ENCODE measurements at regions of chr7 and their contacts with region 1.

Region 1: GRCh38 chr7:55469271-55469681 is 103.0 kb downstream of the VOPP1 start:
- DNase-seq: peak; percentile 42
- H3K4me3 Mint-ChIP-seq: peak overlapping the region; percentile 5
- H3K27ac Mint-ChIP-seq: peak overlapping the region; percentile 85
- H3K4me1 Mint-ChIP-seq: peaks cover 75% of the 10 kb centered on the region
- H3K27me3 Mint-ChIP-seq: no peaks in the 10 kb centered on the region

Region 2: GRCh38 chr7:55365675-55366460 is 103.4 kb before region 1 on chr7:
- CTCF ChIA-PET with region 1: no interaction called
- POLR2A ChIA-PET with region 1: no interaction called
- intact Hi-C with region 1: no loop called
- DNase-seq: peak; percentile 95
- H3K4me3 Mint-ChIP-seq: peak overlapping the region; percentile 80
- H3K27ac Mint-ChIP-seq: peak overlapping the region; percentile 98
- H3K4me1 Mint-ChIP-seq: peaks cover 26% of the 10 kb centered on the region
- H3K27me3 Mint-ChIP-seq: no peaks in the 10 kb centered on the region

Region 3: GRCh38 chr7:55400191-55400590 is 69.1 kb before region 1 on chr7:
- CTCF ChIA-PET with region 1: no interaction called
- POLR2A ChIA-PET with region 1: no interaction called
- intact Hi-C with region 1: no loop called
- DNase-seq: no peak
- H3K4me3 Mint-ChIP-seq: no peak overlapping the region
- H3K27ac Mint-ChIP-seq: no peak overlapping the region
- H3K4me1 Mint-ChIP-seq: no peaks in the 10 kb centered on the region
- H3K27me3 Mint-ChIP-seq: no peaks in the 10 kb centered on the region

Region 4: GRCh38 chr7:55483046-55483445 is 13.8 kb after region 1 on chr7:
- CTCF ChIA-PET with region 1: no interaction called
- POLR2A ChIA-PET with region 1: no interaction called
- intact Hi-C with region 1: loop called (anchors 2 kb)
- DNase-seq: peak; percentile 9
- H3K4me3 Mint-ChIP-seq: no peak overlapping the region
- H3K27ac Mint-ChIP-seq: peak overlapping the region; percentile 52
- H3K4me1 Mint-ChIP-seq: peaks cover 82% of the 10 kb centered on the region
- H3K27me3 Mint-ChIP-seq: no peaks in the 10 kb centered on the region

Region 5: GRCh38 chr7:55546829-55547228 is 77.6 kb after region 1 on chr7:
- CTCF ChIA-PET with region 1: no interaction called
- POLR2A ChIA-PET with region 1: no interaction called
- intact Hi-C with region 1: no loop called
- DNase-seq: peak; percentile 76
- H3K4me3 Mint-ChIP-seq: no peak overlapping the region
- H3K27ac Mint-ChIP-seq: peak overlapping the region; percentile 42
- H3K4me1 Mint-ChIP-seq: peaks cover 75% of the 10 kb centered on the region
- H3K27me3 Mint-ChIP-seq: no peaks in the 10 kb centered on the region

Region 6: DNA sequence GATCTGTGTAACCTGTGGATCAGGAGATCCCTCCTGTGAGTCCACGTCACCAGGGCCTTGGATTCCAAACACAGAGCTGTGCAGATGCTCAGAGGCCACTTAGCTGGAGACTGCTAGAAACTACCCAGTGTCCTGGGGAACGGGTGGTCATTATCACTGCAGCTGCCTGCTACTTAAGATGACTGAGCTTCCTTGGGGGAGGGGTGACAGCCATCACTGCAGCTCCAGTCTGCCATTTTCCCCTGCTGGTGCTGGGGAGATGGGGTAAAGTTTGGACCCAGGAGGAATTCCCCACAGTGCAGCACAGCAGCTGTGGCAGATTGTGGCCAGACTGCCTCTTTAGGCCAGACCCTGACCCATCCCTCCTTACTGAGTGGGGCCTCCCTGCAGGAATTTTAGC is 181.8 kb after region 1 on chr7:
- CTCF ChIA-PET with region 1: no interaction called
- POLR2A ChIA-PET with region 1: no interaction called
- intact Hi-C with region 1: no loop called
- DNase-seq: no peak
- H3K4me3 Mint-ChIP-seq: no peak overlapping the region
- H3K27ac Mint-ChIP-seq: no peak overlapping the region
- H3K4me1 Mint-ChIP-seq: no peaks in the 10 kb centered on the region
- H3K27me3 Mint-ChIP-seq: peaks cover 4% of the 10 kb centered on the region